Activated CD4-positive, alpha-beta memory T cell treated with anti-CD3 and anti-CD28 coated beads, Interleukin-2, amount 10 ng/mL, durations not matched to agents 7 days and 5 days (primary cell): ENCODE measurements at regions of chr2 and their contacts with region 1.

Region 1: GRCh38 chr2:73985308-73986084 is 786 bp downstream of the TET3 start:
- DNase-seq: peak; percentile 42
- H3K4me3 Mint-ChIP-seq: peak overlapping the region; percentile 71
- H3K27ac Mint-ChIP-seq: peak overlapping the region; percentile 81
- H3K4me1 Mint-ChIP-seq: peaks cover 64% of the 10 kb centered on the region
- H3K27me3 Mint-ChIP-seq: peaks cover 19% of the 10 kb centered on the region

Region 2: DNA sequence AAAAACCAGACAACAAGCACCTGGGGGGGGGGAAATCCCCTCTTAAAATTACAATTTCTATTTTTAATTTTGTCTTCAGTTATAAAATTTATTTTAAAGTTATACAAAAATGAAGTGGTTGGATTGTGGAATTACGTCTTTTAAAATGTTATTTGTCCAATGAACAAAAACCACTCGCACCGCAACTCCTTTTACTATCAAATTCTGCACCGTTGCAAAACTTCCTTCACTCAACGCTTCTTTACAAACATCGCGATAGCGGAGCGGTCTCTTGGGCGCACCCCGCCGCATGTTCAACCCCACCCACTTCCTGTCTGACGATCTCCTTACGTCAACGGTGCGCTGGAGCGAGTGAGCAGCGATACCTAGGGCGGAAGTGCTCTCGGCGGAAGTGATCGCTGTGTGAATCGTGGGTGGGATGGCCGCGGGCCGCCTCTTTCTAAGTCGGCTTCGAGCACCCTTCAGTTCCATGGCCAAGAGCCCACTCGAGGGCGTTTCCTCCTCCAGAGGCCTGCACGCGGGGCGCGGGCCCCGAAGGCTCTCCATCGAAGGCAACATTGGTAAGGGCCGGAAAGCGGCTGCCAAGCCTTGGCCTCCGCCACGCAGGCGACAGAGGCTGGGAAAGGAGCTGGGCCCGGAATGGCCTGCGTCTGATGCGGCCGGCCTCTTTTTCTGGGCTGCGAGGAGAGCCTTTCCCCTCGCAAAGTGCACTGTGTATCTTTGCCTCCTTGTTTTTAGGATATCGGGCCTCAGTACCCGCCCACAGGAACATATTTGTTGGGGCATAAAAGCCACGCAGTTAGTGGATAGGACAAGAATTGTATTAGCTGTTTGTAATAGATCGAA is 58.8 kb before region 1 on chr2 and contains the start of gene DGUOK:
- CTCF ChIA-PET with region 1: interaction called, 6 read pairs
- POLR2A ChIA-PET with region 1: interaction called, 18 read pairs
- DNase-seq: peak; percentile 98
- H3K4me3 Mint-ChIP-seq: peak within 1 kb of the TSS; percentile 88
- H3K27ac Mint-ChIP-seq: peak within 1 kb of the TSS; percentile 92
- H3K4me1 Mint-ChIP-seq: peaks cover 57% of the 10 kb centered on the region
- H3K27me3 Mint-ChIP-seq: peaks cover 2% of the 10 kb centered on the region
- total RNA-seq, gene DGUOK: 75.6 to 76.3 TPM

Region 3: GRCh38 chr2:73970850-73971471 is 14.5 kb before region 1 on chr2:
- CTCF ChIA-PET with region 1: interaction called, 10 read pairs
- POLR2A ChIA-PET with region 1: interaction called, 14 read pairs
- DNase-seq: peak; percentile 62
- H3K4me3 Mint-ChIP-seq: peak overlapping the region; percentile 50
- H3K27ac Mint-ChIP-seq: peak overlapping the region; percentile 69
- H3K4me1 Mint-ChIP-seq: peaks cover 32% of the 10 kb centered on the region
- H3K27me3 Mint-ChIP-seq: peaks cover 2% of the 10 kb centered on the region

Region 4: GRCh38 chr2:74002487-74003391 is 17.2 kb after region 1 on chr2:
- CTCF ChIA-PET with region 1: interaction called, 7 read pairs
- POLR2A ChIA-PET with region 1: interaction called, 16 read pairs
- DNase-seq: peak; percentile 80
- H3K4me3 Mint-ChIP-seq: peak overlapping the region; percentile 77
- H3K27ac Mint-ChIP-seq: no peak overlapping the region
- H3K4me1 Mint-ChIP-seq: peaks cover 38% of the 10 kb centered on the region
- H3K27me3 Mint-ChIP-seq: peaks cover 2% of the 10 kb centered on the region